K562 (cell line): ENCODE measurements at regions of chrX and their contacts with region 1.

Region 1: DNA sequence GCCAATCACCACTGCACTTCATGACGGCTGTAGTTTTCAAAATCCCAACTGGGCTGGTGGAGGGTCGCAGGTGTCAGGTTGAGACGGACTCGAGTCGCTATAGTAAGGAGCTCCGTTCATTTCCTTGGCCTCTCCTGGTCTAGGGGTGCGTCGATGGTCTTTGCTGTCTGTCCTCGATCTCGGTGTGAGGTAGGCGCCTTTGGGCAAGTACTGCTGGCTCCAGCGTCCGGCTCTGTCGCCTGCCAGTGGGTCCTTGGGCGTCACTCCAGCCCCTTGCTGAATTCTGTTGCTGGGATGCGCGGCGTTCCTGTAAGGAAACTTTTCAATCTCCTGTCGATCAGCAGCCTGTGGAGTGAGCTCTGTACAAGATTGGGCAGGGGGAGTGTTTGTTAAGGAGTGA is 76.7 kb downstream of the CCNB3 start:
- DNase-seq: no peak
- ATAC-seq: no peak
- H3K4me3 ChIP-seq: no peak overlapping the region
- H3K27ac ChIP-seq: no peak overlapping the region
- H3K4me1 ChIP-seq: no peaks in the 10 kb centered on the region
- H3K27me3 ChIP-seq: no peaks in the 10 kb centered on the region
- CTCF ChIP-seq: no peak
- EP300 ChIP-seq: no peak
- POLR2A ChIP-seq: no peak
- RAD21 ChIP-seq: no peak

Region 2: GRCh38 chrX:49884290-49884862 is 396.9 kb before region 1 on chrX:
- CTCF ChIA-PET with region 1: no interaction called
- POLR2A ChIA-PET with region 1: no interaction called
- in situ Hi-C with region 1: loop called (anchors 10 kb)
- intact Hi-C with region 1: no loop called
- DNase-seq: peak; percentile 39 to 67 (median 40)
- ATAC-seq: peak; percentile 72
- H3K4me3 ChIP-seq: no peak overlapping the region
- H3K27ac ChIP-seq: no peak overlapping the region
- H3K4me1 ChIP-seq: peaks cover 0 to 3% of the 10 kb centered on the region in 2 experiments; a peak in 3 of 5 replicates
- H3K27me3 ChIP-seq: peaks cover 0 to 7% of the 10 kb centered on the region in 2 experiments; a peak in 1 of 5 replicates
- CTCF ChIP-seq: peak; percentile 76 to 89 (median 77)
- EP300 ChIP-seq: no peak
- POLR2A ChIP-seq: no peak
- RAD21 ChIP-seq: peak; percentile 15 to 54; a peak in 2 of 4 replicates

Region 3: GRCh38 chrX:50100188-50100587 is 181.1 kb before region 1 on chrX:
- CTCF ChIA-PET with region 1: no interaction called
- POLR2A ChIA-PET with region 1: no interaction called
- in situ Hi-C with region 1: loop called (anchors 10 kb)
- intact Hi-C with region 1: no loop called
- DNase-seq: peak; percentile 9 to 41 (median 24)
- ATAC-seq: peak; percentile 88
- H3K4me3 ChIP-seq: no peak overlapping the region
- H3K27ac ChIP-seq: no peak overlapping the region
- H3K4me1 ChIP-seq: no peaks in the 10 kb centered on the region
- H3K27me3 ChIP-seq: no peaks in the 10 kb centered on the region
- CTCF ChIP-seq: peak; percentile 46 to 64 (median 64); a peak in 4 of 6 replicates
- EP300 ChIP-seq: no peak
- POLR2A ChIP-seq: no peak
- RAD21 ChIP-seq: peak; percentile 65 to 68